PC-3 (cell line): ENCODE measurements at regions of chr7 and their contacts with region 1.

Region 1: DNA sequence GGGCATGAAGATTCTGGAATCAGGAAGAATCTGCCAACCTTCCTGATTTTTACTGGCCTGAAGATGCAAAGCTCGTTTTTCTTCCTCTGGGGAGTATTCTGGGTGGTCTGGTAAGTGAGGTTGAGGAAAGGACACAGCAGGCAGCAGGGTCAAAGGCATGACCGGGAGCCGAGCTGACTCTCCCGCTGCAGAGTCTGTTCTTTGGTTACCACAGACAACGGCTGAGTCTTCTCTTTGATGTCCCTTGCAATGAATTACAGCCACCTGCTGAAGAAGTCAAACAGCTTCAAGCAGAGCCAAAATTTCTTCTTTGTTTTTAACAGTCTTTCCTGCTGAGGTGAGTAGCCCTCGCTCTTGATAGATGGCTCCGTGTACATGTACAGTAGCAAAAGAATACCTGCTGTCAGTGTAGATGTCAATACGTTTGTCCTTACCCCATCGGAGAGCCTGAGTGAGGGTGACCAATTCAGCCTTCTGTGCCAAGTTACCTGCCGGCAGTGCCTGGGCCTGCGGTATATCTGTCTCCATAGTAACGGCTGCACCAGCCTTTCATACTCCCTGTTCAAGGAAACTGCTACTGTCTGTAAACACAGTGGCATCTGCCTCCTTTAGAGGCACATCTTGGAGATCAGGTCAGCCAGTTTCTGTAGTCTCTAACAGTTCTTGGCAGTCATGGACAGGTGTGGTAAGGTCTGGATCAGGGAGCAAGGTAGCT is 76.4 kb downstream of the PRR15 start:
- DNase-seq: no peak
- ATAC-seq: no peak
- H3K4me3 ChIP-seq: no peak overlapping the region
- H3K27ac ChIP-seq: no peak overlapping the region
- H3K4me1 ChIP-seq: peaks cover 6% of the 10 kb centered on the region
- H3K27me3 ChIP-seq: no peaks in the 10 kb centered on the region
- CTCF ChIP-seq: no peak

Region 2: GRCh38 chr7:29297194-29297890 is 342.7 kb before region 1 on chr7:
- CTCF ChIA-PET with region 1: no interaction called
- POLR2A ChIA-PET with region 1: interaction called, 10 read pairs
- intact Hi-C with region 1: no loop called
- DNase-seq: no peak
- ATAC-seq: no peak
- H3K4me3 ChIP-seq: no peak overlapping the region
- H3K27ac ChIP-seq: no peak overlapping the region
- H3K4me1 ChIP-seq: peaks cover 22% of the 10 kb centered on the region
- H3K27me3 ChIP-seq: no peaks in the 10 kb centered on the region
- CTCF ChIP-seq: peak; percentile 53

Region 3: GRCh38 chr7:29574659-29575058 is 65.4 kb before region 1 on chr7:
- CTCF ChIA-PET with region 1: no interaction called
- POLR2A ChIA-PET with region 1: no interaction called
- intact Hi-C with region 1: no loop called
- DNase-seq: no peak
- ATAC-seq: no peak
- H3K4me3 ChIP-seq: no peak overlapping the region
- H3K27ac ChIP-seq: no peak overlapping the region
- H3K4me1 ChIP-seq: peaks cover 3% of the 10 kb centered on the region
- H3K27me3 ChIP-seq: no peaks in the 10 kb centered on the region
- CTCF ChIP-seq: no peak

Region 4: DNA sequence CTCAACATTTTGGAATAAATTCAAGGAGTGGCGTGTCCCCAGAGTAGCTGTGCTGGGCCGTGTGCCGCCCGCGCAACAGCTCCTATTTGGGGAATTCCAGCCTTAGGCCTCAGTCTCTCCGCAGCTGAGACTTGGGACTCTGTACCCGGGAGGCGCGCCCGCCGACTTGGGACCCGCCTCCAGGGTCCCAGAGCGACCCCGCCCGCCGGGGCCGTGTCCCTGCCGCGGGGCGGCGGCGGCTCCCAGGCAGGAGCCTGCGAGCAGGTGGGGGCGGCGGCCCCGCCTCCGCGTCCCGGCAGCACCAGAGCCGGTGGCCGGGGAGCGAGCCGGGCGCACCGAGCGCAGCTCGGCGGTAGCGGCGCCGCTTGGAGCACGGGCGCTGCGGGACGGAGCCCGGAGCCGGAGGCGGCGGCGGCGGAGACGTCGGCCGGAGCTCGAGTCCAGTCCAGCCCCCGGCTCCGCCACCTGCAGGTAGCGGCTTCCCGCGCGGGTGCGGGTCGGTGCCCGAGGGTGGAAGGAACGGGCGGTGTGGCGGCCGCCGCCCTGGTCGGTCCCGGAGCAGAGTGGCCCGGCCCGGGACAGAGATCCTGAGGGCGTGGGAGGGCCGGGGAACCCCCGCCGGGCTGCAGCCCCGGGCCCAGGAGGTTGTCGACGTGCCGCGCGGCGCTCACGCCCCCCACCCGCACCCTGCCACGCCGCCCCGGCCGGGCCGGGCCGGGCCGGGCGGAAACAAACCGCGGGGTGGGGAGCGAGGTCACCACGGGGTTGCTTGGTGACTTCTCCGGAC is 166.4 kb after region 1 on chr7 and contains the start of gene WIPF3:
- CTCF ChIA-PET with region 1: no interaction called
- POLR2A ChIA-PET with region 1: no interaction called
- intact Hi-C with region 1: loop called (anchors 2 kb)
- DNase-seq: peak; percentile 40
- ATAC-seq: peak; percentile 63
- H3K4me3 ChIP-seq: peak within 1 kb of the TSS; percentile 65
- H3K27ac ChIP-seq: no peak within 1 kb of the TSS
- H3K4me1 ChIP-seq: peaks cover 10% of the 10 kb centered on the region; the same call in 1 of the 2 replicates
- H3K27me3 ChIP-seq: peaks cover 4% of the 10 kb centered on the region; the same call in 1 of the 2 replicates
- CTCF ChIP-seq: no peak
- total RNA-seq, gene WIPF3: 3.3 and 3.4 TPM in 2 replicates

Region 5: GRCh38 chr7:29921404-29922010 is 281.5 kb after region 1 on chr7:
- CTCF ChIA-PET with region 1: no interaction called
- POLR2A ChIA-PET with region 1: interaction called, 25 read pairs
- intact Hi-C with region 1: loop called (anchors 1 kb)
- DNase-seq: peak; percentile 73
- ATAC-seq: peak; percentile 96
- H3K4me3 ChIP-seq: no peak overlapping the region
- H3K27ac ChIP-seq: no peak overlapping the region
- H3K4me1 ChIP-seq: no peaks in the 10 kb centered on the region
- H3K27me3 ChIP-seq: no peaks in the 10 kb centered on the region
- CTCF ChIP-seq: peak; percentile 95

Region 6: GRCh38 chr7:30029696-30030095 is 389.7 kb after region 1 on chr7:
- CTCF ChIA-PET with region 1: no interaction called
- POLR2A ChIA-PET with region 1: no interaction called
- intact Hi-C with region 1: no loop called
- DNase-seq: no peak
- ATAC-seq: no peak
- H3K4me3 ChIP-seq: peak overlapping the region; percentile 84
- H3K27ac ChIP-seq: no peak overlapping the region
- H3K4me1 ChIP-seq: peaks cover 35% of the 10 kb centered on the region
- H3K27me3 ChIP-seq: no peaks in the 10 kb centered on the region
- CTCF ChIP-seq: 0 out of 2 replicates have a peak, but pooled peaks have one; percentile 22

Region 7: GRCh38 chr7:30412810-30413504 is 772.9 kb after region 1 on chr7:
- CTCF ChIA-PET with region 1: no interaction called
- POLR2A ChIA-PET with region 1: no interaction called
- intact Hi-C with region 1: loop called (anchors 5 kb)
- DNase-seq: peak; percentile 85
- ATAC-seq: peak; percentile 95
- H3K4me3 ChIP-seq: no peak overlapping the region
- H3K27ac ChIP-seq: no peak overlapping the region
- H3K4me1 ChIP-seq: no peaks in the 10 kb centered on the region
- H3K27me3 ChIP-seq: no peaks in the 10 kb centered on the region
- CTCF ChIP-seq: peak; percentile 83